ENCODE measurements at regions of chr5 and their contacts with region 1.

Region 1: GRCh38 chr5:17400724-17401464 is 97.1 kb upstream of the TAF11L2 start:
- DNase-seq: no peak
- ATAC-seq: no peak; a peak in 1 of 6 replicates
- H3K4me3 ChIP-seq: no peak overlapping the region
- H3K27ac ChIP-seq: peak overlapping the region; percentile 51 to 74
- H3K4me1 ChIP-seq: peaks cover 68% of the 10 kb centered on the region
- CTCF ChIP-seq: no peak
- EP300 ChIP-seq: no peak
- POLR2A ChIP-seq: no peak
- RAD21 ChIP-seq: no peak

Region 2: GRCh38 chr5:17412760-17413671 is 12.1 kb after region 1 on chr5:
- CTCF ChIA-PET with region 1: interaction called, 10 read pairs
- POLR2A ChIA-PET with region 1: no interaction called
- DNase-seq: peak in 1 of 2 experiments; percentile 42
- ATAC-seq: peak in 1 of 2 experiments; percentile 53; a peak in 3 of 6 replicates
- H3K4me3 ChIP-seq: no peak overlapping the region
- H3K27ac ChIP-seq: peak overlapping the region; percentile 38 to 71
- H3K4me1 ChIP-seq: peaks cover 24% of the 10 kb centered on the region
- CTCF ChIP-seq: no peak
- EP300 ChIP-seq: no peak
- POLR2A ChIP-seq: no peak
- RAD21 ChIP-seq: peak in 1 of 2 experiments; percentile 18; a peak in 2 of 5 replicates

Region 3: DNA sequence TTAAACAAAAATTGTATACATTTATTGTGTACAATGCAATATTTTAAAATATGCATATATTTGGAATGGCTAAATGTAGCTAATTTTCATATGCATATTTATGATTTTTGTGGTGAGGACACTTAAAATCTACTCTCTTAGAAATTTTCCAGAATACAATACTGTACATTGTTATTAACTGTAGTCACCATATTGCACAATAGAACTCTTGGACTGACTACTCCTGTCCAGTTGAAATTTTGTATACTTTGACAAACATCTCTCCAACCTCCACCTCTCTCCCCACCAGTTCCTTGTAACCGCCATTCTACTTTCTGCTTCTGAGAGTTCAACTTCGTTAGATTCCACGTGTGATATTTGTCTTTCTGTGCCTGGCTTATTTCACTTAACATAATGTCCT is 48.0 kb after region 1 on chr5:
- CTCF ChIA-PET with region 1: no interaction called
- POLR2A ChIA-PET with region 1: no interaction called
- DNase-seq: no peak
- ATAC-seq: no peak
- H3K4me3 ChIP-seq: no peak overlapping the region
- H3K27ac ChIP-seq: no peak overlapping the region
- H3K4me1 ChIP-seq: peaks cover 18% of the 10 kb centered on the region
- CTCF ChIP-seq: no peak
- EP300 ChIP-seq: no peak
- POLR2A ChIP-seq: no peak
- RAD21 ChIP-seq: no peak

Region 4: GRCh38 chr5:17477573-17478265 is 76.8 kb after region 1 on chr5:
- CTCF ChIA-PET with region 1: no interaction called
- POLR2A ChIA-PET with region 1: no interaction called
- DNase-seq: no peak
- ATAC-seq: no peak
- H3K4me3 ChIP-seq: no peak overlapping the region
- H3K27ac ChIP-seq: 0 out of 6 replicates have a peak overlapping the region, but pooled peaks of 1 of the 2 experiments have one; percentile 11
- H3K4me1 ChIP-seq: peaks cover 11% of the 10 kb centered on the region; the same call in 2 of the 3 replicates
- CTCF ChIP-seq: no peak
- EP300 ChIP-seq: no peak
- POLR2A ChIP-seq: no peak
- RAD21 ChIP-seq: no peak